WTC11 (cell line): ENCODE measurements at regions of chr13 and their contacts with region 1.

Region 1: DNA sequence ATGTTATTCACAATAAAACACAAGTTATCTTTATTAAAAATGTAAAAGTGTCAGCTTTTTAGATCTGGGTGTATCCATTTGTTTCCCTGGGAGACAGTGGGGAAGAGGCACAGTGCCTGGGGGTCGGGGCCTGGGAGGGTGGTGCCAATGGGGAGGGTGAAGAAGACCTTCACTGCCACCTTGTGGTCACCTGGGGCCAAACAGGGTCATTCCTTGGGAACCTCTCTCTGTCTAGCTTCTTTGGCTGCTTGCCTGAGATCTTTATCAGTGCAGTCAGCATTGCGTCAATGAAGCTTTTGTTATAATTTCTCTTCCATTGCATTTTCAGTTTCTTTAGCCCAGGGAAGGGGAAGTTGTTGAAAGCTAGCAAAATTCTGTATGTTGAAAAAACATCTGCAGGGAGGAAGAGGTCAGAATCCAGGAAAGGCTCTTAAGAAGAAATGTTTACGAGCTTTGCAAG is 39.1 kb downstream of the PCDH8 start:
- DNase-seq: peak; percentile 83
- ATAC-seq: peak; percentile 96
- H3K4me3 Mint-ChIP-seq: no peak overlapping the region
- H3K27ac Mint-ChIP-seq: no peak overlapping the region
- H3K4me1 Mint-ChIP-seq: peaks cover 16% of the 10 kb centered on the region
- H3K27me3 Mint-ChIP-seq: no peaks in the 10 kb centered on the region
- CTCF ChIP-seq: peak; percentile 80

Region 2: DNA sequence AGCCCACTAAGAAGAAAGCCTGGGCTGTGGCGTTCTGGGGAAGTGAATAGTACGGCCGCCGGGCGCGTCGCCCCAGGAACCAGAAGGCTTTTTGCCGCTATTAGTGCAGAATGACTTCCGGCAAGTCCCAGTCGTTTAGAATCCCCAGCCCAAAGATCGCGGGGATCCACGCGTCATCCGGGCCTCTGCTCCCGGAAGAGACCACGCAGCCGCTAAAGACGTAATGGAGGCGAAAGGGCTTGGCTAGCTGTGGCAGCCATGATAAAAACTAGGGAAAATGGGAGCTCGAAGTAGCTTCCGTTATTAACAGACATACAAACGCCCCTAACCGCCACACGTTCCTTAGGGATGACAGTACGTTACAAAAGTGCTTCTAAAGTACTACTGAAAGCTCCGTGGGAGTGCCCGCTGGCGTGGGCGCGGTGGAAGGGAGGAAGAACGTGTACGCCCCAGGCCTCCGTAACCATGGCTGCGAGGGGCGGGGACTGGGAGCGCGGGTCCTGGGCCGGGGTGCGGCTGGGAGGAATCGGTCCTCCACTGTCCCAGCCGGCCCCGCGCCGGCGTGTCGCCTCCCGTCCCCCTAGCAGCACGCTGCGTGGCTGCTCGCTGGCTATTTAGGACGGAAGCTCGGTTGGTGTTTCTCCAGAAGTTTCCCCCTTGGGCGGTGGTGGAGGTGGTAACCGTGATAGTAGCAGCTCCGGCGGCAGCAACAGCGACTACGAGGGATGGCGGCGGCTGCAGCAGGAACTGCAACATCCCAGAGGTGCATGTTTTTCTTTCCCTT is 157.0 kb before region 1 on chr13 and contains the start of gene SUGT1:
- CTCF ChIA-PET with region 1: interaction called, 24 read pairs
- POLR2A ChIA-PET with region 1: no interaction called
- DNase-seq: peak; percentile 96
- ATAC-seq: peak; percentile 96
- H3K4me3 Mint-ChIP-seq: no peak within 1 kb of the TSS
- H3K27ac Mint-ChIP-seq: no peak within 1 kb of the TSS
- H3K4me1 Mint-ChIP-seq: peaks cover 7% of the 10 kb centered on the region
- H3K27me3 Mint-ChIP-seq: no peaks in the 10 kb centered on the region
- CTCF ChIP-seq: no peak; the same call in 1 of the 2 replicates
- total RNA-seq, gene SUGT1: 74.8 to 77.6 TPM (median 76.3 TPM) in 3 replicates

Region 3: GRCh38 chr13:52686381-52686780 is 123.0 kb before region 1 on chr13:
- CTCF ChIA-PET with region 1: interaction called, 27 read pairs
- POLR2A ChIA-PET with region 1: no interaction called
- DNase-seq: no peak
- ATAC-seq: no peak
- H3K4me3 Mint-ChIP-seq: no peak overlapping the region
- H3K27ac Mint-ChIP-seq: peak overlapping the region; percentile 10; the same call in 1 of the 2 replicates
- H3K4me1 Mint-ChIP-seq: no peaks in the 10 kb centered on the region
- H3K27me3 Mint-ChIP-seq: no peaks in the 10 kb centered on the region
- CTCF ChIP-seq: no peak

Region 4: DNA sequence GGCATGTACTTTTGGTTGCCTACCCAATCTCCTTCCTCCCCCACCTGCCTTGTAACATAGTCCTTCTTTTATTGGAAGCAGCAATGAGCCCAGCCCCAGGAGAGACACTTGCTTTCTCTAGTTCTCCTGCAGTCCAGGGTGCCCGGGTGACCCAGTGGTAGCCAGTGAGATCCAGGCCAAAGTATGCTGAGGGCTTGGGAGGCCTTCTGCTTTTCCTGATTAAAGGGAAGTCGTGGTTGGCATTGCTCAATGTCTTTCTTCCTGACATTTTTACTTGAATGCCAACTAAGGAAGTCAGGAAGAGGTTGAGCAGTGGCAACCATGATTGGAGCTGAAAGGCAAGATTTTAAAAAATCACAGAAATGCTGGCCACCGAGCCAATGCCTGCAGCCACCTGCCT is 95.4 kb before region 1 on chr13:
- CTCF ChIA-PET with region 1: interaction called, 16 read pairs
- POLR2A ChIA-PET with region 1: interaction called, 3 read pairs
- DNase-seq: no peak
- ATAC-seq: no peak
- H3K4me3 Mint-ChIP-seq: no peak overlapping the region
- H3K27ac Mint-ChIP-seq: no peak overlapping the region
- H3K4me1 Mint-ChIP-seq: peaks cover 31% of the 10 kb centered on the region
- H3K27me3 Mint-ChIP-seq: no peaks in the 10 kb centered on the region; the same call in 1 of the 2 replicates
- CTCF ChIP-seq: no peak

Region 5: GRCh38 chr13:53200498-53201453 is 391.4 kb after region 1 on chr13:
- CTCF ChIA-PET with region 1: interaction called, 10 read pairs
- POLR2A ChIA-PET with region 1: no interaction called
- DNase-seq: peak; percentile 90
- ATAC-seq: peak; percentile 78
- H3K4me3 Mint-ChIP-seq: peak overlapping the region; percentile 55
- H3K27ac Mint-ChIP-seq: no peak overlapping the region
- H3K4me1 Mint-ChIP-seq: no peaks in the 10 kb centered on the region
- H3K27me3 Mint-ChIP-seq: peaks cover 62% of the 10 kb centered on the region
- CTCF ChIP-seq: peak; percentile 92